ENCODE measurements at regions of chr18 and their contacts with region 1.

Region 1: DNA sequence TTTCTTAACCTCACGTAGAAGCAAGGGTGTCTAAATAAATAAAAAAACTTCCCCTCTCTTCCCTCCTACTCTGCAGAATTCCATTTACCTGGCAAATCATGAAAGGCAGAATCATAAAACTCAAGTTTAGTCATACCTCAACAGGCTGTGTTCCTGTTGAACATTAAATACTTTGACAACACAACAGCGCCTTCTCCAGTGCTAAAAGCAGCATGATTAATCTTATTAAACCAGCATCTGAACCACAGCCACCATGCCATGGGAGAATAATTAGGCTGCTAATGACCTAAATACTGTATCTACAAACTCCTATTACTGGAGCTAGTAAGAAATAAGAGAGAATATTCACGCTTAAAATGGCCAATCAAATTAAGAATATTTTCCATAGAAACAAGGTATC is 68.1 kb downstream of the CDH2 start:
- DNase-seq: peak; percentile 77
- ATAC-seq: peak; percentile 53
- H3K4me3 ChIP-seq: no peak overlapping the region
- H3K27ac ChIP-seq: no peak overlapping the region
- H3K4me1 ChIP-seq: peaks cover 53% of the 10 kb centered on the region
- H3K27me3 ChIP-seq: no peaks in the 10 kb centered on the region
- CTCF ChIP-seq: peak; percentile 67

Region 2: GRCh38 chr18:27605107-27605834 is 503.5 kb before region 1 on chr18:
- CTCF ChIA-PET with region 1: interaction called, 4 read pairs
- POLR2A ChIA-PET with region 1: no interaction called
- intact Hi-C with region 1: loop called (anchors 2 kb)
- DNase-seq: peak; percentile 83
- ATAC-seq: peak; percentile 93
- H3K4me3 ChIP-seq: no peak overlapping the region
- H3K27ac ChIP-seq: no peak overlapping the region
- H3K4me1 ChIP-seq: peaks cover 11% of the 10 kb centered on the region
- H3K27me3 ChIP-seq: no peaks in the 10 kb centered on the region
- CTCF ChIP-seq: peak; percentile 87

Region 3: DNA sequence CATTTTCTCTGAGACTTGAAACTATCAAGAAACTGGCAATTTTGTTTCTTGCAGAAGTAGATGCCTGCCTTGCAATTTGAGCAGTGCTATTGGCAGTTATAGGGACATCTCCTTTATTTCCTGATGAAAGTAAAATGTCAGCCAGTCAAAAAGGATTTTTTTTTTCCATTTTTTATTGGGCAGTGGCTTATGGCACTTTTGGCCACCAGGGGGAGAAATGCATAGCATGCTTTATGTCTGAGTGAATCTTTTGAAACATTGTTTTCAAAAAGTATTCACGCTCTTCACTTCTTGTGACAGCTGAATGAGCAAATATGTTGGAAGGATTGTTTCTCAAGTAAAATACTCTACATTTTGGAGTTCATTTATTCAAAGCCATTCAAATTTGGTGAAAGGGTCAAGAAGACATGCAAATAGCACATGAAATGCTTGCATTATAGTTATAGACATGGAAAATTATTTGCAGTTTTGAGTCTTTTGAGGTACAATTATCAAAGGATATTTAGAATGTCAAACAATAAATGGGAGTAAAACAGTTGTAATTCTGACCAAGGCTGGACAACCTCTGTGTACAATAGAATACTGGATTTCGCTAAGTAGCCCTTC is 422.9 kb before region 1 on chr18:
- CTCF ChIA-PET with region 1: no interaction called
- POLR2A ChIA-PET with region 1: no interaction called
- intact Hi-C with region 1: loop called (anchors 5 kb)
- DNase-seq: peak; percentile 69
- ATAC-seq: peak; percentile 27; the same call in 1 of the 2 replicates
- H3K4me3 ChIP-seq: no peak overlapping the region
- H3K27ac ChIP-seq: no peak overlapping the region
- H3K4me1 ChIP-seq: no peaks in the 10 kb centered on the region
- H3K27me3 ChIP-seq: no peaks in the 10 kb centered on the region
- CTCF ChIP-seq: peak; percentile 91

Region 4: DNA sequence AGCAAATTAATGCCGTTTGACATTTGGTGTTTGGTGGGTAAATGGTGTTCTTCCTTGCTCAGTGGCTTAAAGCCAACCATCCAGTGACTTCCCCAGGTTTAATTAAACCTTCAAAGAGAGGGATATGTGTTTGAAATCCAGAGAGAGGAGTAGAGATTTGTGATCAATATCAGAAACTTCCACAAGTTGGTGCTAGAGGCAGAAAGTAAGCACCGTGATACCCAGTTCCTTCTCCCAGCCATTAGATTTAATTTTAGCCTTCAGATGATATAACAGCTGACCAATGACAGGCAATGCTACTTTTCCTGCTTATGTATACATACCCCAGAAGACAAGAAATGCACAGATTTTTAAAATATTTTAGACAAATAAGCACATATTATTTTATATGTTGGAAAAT is 330.4 kb before region 1 on chr18:
- CTCF ChIA-PET with region 1: no interaction called
- POLR2A ChIA-PET with region 1: interaction called, 5 read pairs
- intact Hi-C with region 1: loop called (anchors 2 kb)
- DNase-seq: peak; percentile 52
- ATAC-seq: peak; percentile 64
- H3K4me3 ChIP-seq: no peak overlapping the region
- H3K27ac ChIP-seq: no peak overlapping the region
- H3K4me1 ChIP-seq: no peaks in the 10 kb centered on the region
- H3K27me3 ChIP-seq: no peaks in the 10 kb centered on the region
- CTCF ChIP-seq: peak; percentile 73